ENCODE measurements at regions of chr12 and their contacts with region 1.

Region 1: DNA sequence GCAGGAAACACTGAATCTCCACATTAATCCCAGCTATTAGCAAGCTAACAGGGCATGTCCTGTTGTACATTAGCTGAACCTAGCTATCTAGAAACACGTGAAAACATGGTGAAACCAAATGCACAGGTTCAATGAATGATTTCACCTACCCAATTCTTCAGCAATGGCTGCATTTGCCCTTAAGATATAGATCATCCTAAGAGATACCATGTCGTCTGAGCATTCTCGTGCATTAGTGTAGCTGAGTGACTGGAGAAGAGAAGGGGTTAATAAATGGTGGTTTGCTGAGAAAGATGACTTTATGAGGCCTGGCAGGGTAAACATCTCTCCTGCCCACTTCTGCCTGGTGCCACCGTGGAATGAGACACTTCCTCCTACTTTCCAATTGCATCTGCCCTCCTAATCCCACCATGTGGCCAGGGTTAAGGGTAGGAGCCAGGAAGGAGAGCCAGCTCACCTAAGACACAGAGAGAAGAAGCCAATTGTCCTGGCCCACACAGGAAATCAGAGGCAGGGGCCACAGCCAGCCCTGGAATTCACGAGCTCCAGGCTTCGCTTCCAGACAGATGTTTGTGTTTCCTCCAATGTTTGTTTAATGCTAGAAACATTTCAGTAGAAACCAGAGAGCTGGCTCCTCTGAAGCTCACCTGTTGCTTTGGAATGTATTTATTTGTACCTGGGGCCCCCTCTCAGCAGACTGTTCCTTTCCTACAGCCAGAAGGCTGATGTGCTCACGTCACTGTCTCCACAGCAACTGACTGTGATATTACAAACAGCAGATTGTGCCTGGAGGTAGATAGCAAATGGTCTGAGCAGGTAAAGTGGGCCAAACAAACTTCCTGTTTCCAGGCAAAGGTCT is 126.0 kb upstream of the PARP11 start:
- DNase-seq: peak; percentile 94
- H3K4me3 ChIP-seq: no peak overlapping the region
- H3K4me3 Mint-ChIP-seq: peak overlapping the region; percentile 19
- H3K27ac Mint-ChIP-seq: peak overlapping the region; percentile 98
- H3K4me1 ChIP-seq: peaks cover 31% of the 10 kb centered on the region
- H3K4me1 Mint-ChIP-seq: peaks cover 51% of the 10 kb centered on the region
- H3K27me3 ChIP-seq: no peaks in the 10 kb centered on the region
- H3K27me3 Mint-ChIP-seq: no peaks in the 10 kb centered on the region
- CTCF ChIP-seq: no peak

Region 2: GRCh38 chr12:3896801-3897331 is 102.3 kb before region 1 on chr12:
- CTCF ChIA-PET with region 1: no interaction called
- POLR2A ChIA-PET with region 1: interaction called, 6 read pairs
- intact Hi-C with region 1: loop called (anchors 1 kb)
- DNase-seq: peak; percentile 71 to 77
- H3K4me3 ChIP-seq: no peak overlapping the region
- H3K4me3 Mint-ChIP-seq: no peak overlapping the region
- H3K27ac Mint-ChIP-seq: peak overlapping the region; percentile 57
- H3K4me1 ChIP-seq: peaks cover 42% of the 10 kb centered on the region
- H3K4me1 Mint-ChIP-seq: peaks cover 22% of the 10 kb centered on the region
- H3K27me3 ChIP-seq: no peaks in the 10 kb centered on the region
- H3K27me3 Mint-ChIP-seq: no peaks in the 10 kb centered on the region
- CTCF ChIP-seq: no peak

Region 3: DNA sequence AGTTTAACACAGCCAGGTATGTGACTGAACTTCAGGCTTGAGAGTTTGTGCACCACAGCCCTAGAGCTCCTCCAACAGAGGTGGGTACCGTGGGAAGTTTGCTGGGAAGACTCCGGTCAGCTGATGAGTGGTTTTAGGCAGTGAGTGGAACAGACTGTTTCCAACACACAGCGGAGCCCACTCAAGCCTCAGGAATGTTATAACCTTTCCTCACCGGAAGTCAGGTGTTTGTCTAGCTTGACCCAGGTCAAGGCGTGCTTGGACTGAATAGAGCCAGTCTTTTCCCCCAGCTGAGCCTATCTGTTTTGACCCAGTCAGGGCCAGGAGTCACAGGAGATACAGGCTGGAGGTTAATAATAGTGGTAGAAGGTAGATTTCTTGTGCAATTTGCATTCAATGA is 12.4 kb after region 1 on chr12:
- CTCF ChIA-PET with region 1: interaction called, 18 read pairs
- POLR2A ChIA-PET with region 1: interaction called, 23 read pairs
- intact Hi-C with region 1: loop called (anchors 1 kb)
- DNase-seq: peak; percentile 86 to 91
- H3K4me3 ChIP-seq: no peak overlapping the region
- H3K4me3 Mint-ChIP-seq: peak overlapping the region; percentile 12
- H3K27ac Mint-ChIP-seq: peak overlapping the region; percentile 35
- H3K4me1 ChIP-seq: peaks cover 68% of the 10 kb centered on the region
- H3K4me1 Mint-ChIP-seq: peaks cover 57% of the 10 kb centered on the region
- H3K27me3 ChIP-seq: no peaks in the 10 kb centered on the region
- H3K27me3 Mint-ChIP-seq: no peaks in the 10 kb centered on the region
- CTCF ChIP-seq: no peak

Region 4: DNA sequence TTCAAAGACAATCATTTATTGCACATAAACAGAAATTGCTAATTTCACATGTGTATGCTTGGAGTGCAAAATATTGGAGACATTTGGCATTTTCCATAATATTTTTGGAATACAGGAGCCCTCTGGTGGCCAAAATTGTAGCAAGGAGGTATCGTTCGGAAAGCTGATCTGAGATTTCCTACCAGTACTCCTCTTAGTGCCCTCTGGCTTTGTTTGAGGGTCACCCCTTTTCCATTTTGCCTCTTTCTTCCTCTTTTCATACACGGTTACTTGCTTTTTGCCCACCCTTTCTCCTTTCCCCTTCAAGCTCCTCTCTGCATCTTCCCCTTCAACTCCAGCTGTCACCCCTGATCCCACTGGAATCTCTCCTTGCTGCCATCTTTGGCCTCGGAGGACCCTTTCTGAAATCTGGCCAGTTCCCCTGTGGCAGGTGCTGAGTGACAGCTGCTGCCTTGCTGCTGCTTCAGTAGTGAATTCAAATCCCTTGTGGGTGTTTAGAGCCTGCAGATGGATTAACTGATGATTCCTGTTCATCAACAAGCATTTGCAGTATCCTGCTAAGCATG is 38.6 kb after region 1 on chr12:
- CTCF ChIA-PET with region 1: interaction called, 42 read pairs
- POLR2A ChIA-PET with region 1: interaction called, 4 read pairs
- intact Hi-C with region 1: loop called (anchors 1 kb)
- DNase-seq: peak; percentile 54 to 82
- H3K4me3 ChIP-seq: no peak overlapping the region
- H3K4me3 Mint-ChIP-seq: no peak overlapping the region
- H3K27ac Mint-ChIP-seq: no peak overlapping the region
- H3K4me1 ChIP-seq: peaks cover 36% of the 10 kb centered on the region
- H3K4me1 Mint-ChIP-seq: peaks cover 38% of the 10 kb centered on the region
- H3K27me3 ChIP-seq: no peaks in the 10 kb centered on the region
- H3K27me3 Mint-ChIP-seq: no peaks in the 10 kb centered on the region
- CTCF ChIP-seq: peak; percentile 89 to 95